ENCODE measurements at regions of chr15 and their contacts with region 1.

Region 1: DNA sequence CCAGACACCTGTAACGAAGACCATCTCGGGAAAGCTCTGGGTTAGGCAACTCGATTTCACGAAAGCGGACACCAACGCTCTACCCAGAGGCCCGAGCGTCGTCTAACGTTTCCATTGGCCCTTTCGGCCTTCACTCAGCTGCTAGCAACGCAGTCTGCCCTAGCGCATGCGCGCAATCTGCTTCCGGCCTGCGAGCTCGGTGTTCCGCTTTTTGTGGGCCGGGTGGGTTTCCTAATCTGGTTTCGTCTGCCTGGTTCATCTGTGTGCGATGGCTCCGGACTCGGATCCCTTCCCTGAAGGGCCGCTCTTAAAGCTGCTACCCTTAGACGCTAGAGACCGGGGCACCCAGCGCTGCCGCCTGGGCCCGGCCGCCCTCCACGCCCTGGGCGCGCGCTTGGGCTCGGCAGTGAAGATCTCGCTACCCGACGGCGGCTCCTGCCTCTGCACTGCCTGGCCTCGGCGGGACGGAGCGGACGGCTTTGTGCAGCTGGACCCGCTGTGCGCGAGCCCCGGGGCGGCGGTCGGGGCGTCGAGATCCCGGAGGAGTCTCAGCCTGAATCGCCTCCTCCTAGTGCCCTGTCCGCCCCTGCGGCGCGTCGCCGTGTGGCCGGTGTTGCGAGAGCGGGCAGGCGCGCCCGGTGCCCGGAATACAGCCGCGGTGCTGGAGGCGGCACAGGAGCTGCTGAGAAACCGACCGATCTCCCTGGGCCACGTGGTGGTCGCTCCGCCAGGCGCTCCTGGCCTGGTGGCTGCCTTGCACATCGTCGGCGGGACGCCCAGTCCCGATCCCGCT is 24.0 kb upstream of the GATM start:
- DNase-seq: peak; percentile 80 to 97
- H3K4me3 ChIP-seq: peak overlapping the region; percentile 92 to 94
- H3K27ac ChIP-seq: peak overlapping the region; percentile 85 to 92
- H3K4me1 ChIP-seq: peaks cover 3 to 18% of the 10 kb centered on the region in 2 donors
- H3K27me3 ChIP-seq: no peaks in the 10 kb centered on the region
- CTCF ChIP-seq: peak in 1 of 3 experiments; percentile 14

Region 2: GRCh38 chr15:45307230-45307924 is 95.0 kb before region 1 on chr15:
- intact Hi-C with region 1: loop called (anchors 2 kb)
- DNase-seq: no peak
- H3K4me3 ChIP-seq: peak overlapping the region in 1 of 2 donors; percentile 48
- H3K27ac ChIP-seq: no peak overlapping the region
- H3K4me1 ChIP-seq: peaks cover 0 to 2% of the 10 kb centered on the region in 2 donors
- H3K27me3 ChIP-seq: no peaks in the 10 kb centered on the region
- CTCF ChIP-seq: peak; percentile 35 to 58 (median 35)

Region 3: DNA sequence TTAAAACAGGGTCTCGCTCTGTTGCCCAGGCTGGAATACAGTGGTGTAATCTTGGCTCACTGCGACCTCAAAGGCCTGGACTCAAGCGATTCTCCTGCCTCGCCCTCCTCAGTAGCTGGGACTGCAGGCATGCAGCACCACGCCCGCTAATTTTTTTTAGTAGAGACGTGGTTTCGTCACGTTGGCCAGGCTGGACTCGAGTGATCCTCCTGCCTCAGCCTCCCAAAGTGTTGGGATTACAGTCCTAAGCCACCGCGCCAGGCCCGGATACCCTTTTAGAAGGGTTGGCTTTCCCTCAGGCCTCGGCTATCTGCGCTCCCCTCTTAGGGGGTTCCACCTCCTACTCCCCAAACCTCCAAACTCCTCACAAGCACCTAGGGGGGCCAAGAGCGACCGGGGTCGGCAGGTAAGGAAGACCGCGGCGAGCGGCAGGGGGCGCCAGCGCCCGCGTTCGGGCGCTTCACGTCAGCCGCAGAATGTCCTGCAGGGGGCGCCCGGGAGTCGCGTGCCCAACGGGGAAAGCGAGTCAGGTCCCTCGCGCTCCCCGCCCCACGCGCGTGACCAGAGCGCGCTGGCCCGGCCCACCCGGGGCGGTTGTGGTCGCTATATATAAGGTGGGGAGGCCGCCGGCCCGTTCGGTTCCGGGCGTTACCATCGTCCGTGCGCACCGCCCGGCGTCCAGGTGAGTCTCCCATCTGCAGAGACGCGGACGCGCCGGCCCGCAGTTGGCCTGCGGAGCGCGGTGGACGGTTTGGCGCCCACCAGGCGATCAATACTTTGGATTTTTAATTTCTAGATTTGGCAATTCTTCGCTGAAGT is 27.8 kb after region 1 on chr15:
- intact Hi-C with region 1: no loop called
- DNase-seq: peak in 1 of 2 donors; percentile 77
- H3K4me3 ChIP-seq: peak overlapping the region; percentile 43 to 56
- H3K27ac ChIP-seq: no peak overlapping the region
- H3K4me1 ChIP-seq: peaks cover 0 to 5% of the 10 kb centered on the region in 2 donors
- H3K27me3 ChIP-seq: no peaks in the 10 kb centered on the region
- CTCF ChIP-seq: peak; percentile 92 to 97 (median 92)

Region 4: GRCh38 chr15:45678459-45679178 is 276.3 kb after region 1 on chr15:
- intact Hi-C with region 1: no loop called
- DNase-seq: no peak
- H3K4me3 ChIP-seq: no peak overlapping the region
- H3K27ac ChIP-seq: no peak overlapping the region
- H3K4me1 ChIP-seq: no peaks in the 10 kb centered on the region
- H3K27me3 ChIP-seq: no peaks in the 10 kb centered on the region
- CTCF ChIP-seq: no peak